IMR-90 (cell line): ENCODE measurements at regions of chr4 and their contacts with region 1.

Region 1: GRCh38 chr4:125891597-125892258 is 577.0 kb downstream of the FAT4 start:
- DNase-seq: peak; percentile 98
- ATAC-seq: peak; percentile 98
- H3K4me3 ChIP-seq: no peak overlapping the region
- H3K27ac ChIP-seq: peak overlapping the region; percentile 37; the same call in 1 of the 2 replicates
- H3K4me1 ChIP-seq: peaks cover 2% of the 10 kb centered on the region; the same call in 1 of the 2 replicates
- H3K27me3 ChIP-seq: no peaks in the 10 kb centered on the region
- CTCF ChIP-seq: no peak
- POLR2A ChIP-seq: no peak
- RAD21 ChIP-seq: no peak

Region 2: DNA sequence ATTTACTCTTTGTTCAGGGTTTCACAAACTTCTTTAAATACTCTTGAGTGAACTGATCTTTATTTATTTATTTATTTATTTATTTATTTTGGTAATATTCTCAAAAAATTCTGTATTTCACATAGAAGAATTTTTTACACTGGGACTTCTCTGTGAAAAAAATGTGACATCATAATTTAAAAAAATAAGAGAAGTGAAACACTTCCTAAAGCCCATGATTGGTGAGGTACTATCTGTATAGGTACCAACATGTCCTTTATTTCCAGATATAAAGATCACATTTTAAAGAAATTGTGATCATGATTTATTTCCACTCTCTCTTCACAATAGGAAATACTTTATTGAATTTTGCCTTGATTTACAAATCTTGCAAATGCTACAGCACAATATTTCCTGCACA is 79.8 kb before region 1 on chr4:
- CTCF ChIA-PET with region 1: no interaction called
- POLR2A ChIA-PET with region 1: interaction called, 12 read pairs
- dilution Hi-C with region 1: no loop called
- in situ Hi-C with region 1: no loop called
- intact Hi-C with region 1: no loop called
- DNase-seq: no peak
- ATAC-seq: no peak
- H3K4me3 ChIP-seq: no peak overlapping the region
- H3K27ac ChIP-seq: no peak overlapping the region
- H3K4me1 ChIP-seq: no peaks in the 10 kb centered on the region
- H3K27me3 ChIP-seq: no peaks in the 10 kb centered on the region
- CTCF ChIP-seq: no peak
- POLR2A ChIP-seq: no peak
- RAD21 ChIP-seq: no peak